Ascending aorta (tissue), 2 donors: ENCODE measurements at regions of chr2 and their contacts with region 1.

Region 1: GRCh38 chr2:208265801-208266552 is at the start of gene PIKFYVE:
- DNase-seq: peak; percentile 88 to 98
- H3K4me3 ChIP-seq: peak within 1 kb of the TSS; percentile 93 to 100
- H3K27ac ChIP-seq: peak within 1 kb of the TSS; percentile 97 to 98
- H3K4me1 ChIP-seq: peaks cover 0 to 21% of the 10 kb centered on the region in 2 donors
- H3K27me3 ChIP-seq: no peaks in the 10 kb centered on the region
- CTCF ChIP-seq: no peak
- total RNA-seq, gene PIKFYVE: 12.0 TPM

Region 2: DNA sequence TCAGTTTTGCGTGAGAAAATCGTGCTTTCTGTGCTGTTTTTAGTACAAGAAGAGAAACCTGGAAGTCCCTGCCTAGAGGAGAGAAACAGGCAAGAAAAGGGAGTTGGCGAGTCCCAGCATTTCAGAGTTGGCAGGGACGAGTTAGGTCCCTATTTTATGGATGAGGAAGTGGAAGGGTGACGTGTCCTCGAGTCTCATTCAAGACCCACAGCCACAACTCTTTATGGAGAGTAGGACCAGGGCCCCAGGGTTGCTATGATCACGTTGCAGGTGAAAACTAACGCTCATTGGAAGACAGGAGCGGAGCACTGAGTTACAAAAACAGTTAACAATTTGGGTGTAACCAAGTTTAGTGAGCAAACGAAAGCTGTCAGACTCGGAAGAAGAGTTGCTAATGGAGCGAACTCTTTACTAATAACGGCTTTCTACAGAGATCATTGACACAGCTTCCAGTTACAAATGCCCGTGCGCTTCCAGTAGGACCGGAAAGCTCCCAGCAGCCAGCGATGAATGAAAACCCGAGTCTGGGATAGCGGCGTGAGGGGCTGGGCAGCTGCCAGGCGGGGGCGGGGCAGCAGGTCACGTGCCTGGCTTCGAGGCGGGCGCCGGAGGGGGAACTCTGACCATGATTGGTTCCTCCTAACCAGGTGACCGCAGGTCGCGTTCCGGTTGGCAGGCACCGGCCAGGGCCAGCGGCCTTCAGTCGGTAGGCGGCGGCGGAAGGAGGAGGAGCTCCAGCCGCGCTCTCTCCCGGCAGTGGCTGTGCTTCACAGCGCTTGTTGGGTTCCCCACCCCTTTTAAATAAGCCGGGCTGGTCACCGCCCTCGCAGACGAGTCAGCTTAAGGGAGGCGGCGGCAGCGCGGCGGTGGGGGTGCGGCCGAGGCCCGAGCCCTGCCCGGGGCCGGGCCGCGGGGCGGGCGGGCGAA is 554.9 kb before region 1 on chr2 and contains the start of gene CCNYL1:
- intact Hi-C with region 1: loop called (anchors 2 kb)
- DNase-seq: peak; percentile 95 to 99
- H3K4me3 ChIP-seq: peak within 1 kb of the TSS; percentile 75 to 92
- H3K27ac ChIP-seq: peak within 1 kb of the TSS; percentile 88 to 90
- H3K4me1 ChIP-seq: peaks cover 0 to 6% of the 10 kb centered on the region in 2 donors
- H3K27me3 ChIP-seq: no peaks in the 10 kb centered on the region
- CTCF ChIP-seq: peak; percentile 17 to 55 (median 17)
- total RNA-seq, gene CCNYL1: 12.3 TPM

Region 3: DNA sequence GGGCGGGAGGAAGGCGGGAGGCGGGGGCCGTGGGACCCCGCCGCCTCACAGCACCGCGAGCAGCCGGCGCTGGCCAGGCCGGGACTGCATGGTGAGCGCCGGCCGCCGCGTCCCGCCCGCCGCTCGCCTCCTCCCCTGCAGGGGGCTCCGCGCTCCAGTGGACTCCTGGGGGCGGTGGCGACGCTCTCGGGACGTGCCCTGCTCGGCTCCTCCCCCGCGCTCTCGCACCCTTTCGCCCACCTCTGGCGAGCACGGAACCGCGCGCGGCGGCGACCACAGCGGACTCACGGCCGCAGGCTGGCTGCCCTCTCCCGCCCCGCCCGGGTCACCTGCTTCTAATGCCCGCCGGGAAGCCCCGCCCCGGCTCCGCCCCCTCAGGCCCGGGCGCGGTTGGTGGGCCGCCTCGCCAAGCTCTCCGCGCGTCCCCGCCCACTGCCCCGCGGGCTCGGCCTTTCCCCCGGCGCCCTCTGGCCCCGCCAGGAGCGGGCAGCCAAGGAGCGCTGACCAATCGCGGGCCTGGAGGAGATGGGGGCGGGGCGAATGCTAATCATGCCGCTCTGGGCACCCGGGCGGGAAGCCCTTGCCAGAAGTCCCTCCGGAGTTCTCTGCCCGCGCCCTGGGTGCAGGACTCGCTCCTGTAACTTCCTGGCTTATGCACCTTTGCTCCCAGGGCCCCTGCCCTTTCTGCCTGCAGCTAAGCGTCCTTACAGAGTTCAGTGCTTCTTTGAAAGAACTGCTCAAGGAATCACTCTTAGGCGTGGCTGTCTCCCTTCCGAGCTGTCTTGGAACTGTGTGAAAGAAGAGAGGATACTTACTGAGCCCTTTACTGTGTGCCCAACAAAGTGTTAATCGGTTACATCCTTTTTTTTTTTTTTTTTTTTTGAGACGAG is 496.1 kb before region 1 on chr2 and contains the start of gene FZD5:
- intact Hi-C with region 1: loop called (anchors 5 kb)
- DNase-seq: peak; percentile 87 to 98
- H3K4me3 ChIP-seq: peak within 1 kb of the TSS; percentile 75 to 83
- H3K27ac ChIP-seq: peak within 1 kb of the TSS; percentile 61 to 65
- H3K4me1 ChIP-seq: peaks cover 8 to 9% of the 10 kb centered on the region in 2 donors
- H3K27me3 ChIP-seq: no peaks in the 10 kb centered on the region
- CTCF ChIP-seq: peak; percentile 45 to 68 (median 47)
- total RNA-seq, gene FZD5: 6.9 TPM

Region 4: GRCh38 chr2:208175069-208175839 is 90.7 kb before region 1 on chr2:
- intact Hi-C with region 1: loop called (anchors 1 kb)
- DNase-seq: peak; percentile 35 to 88
- H3K4me3 ChIP-seq: no peak overlapping the region
- H3K27ac ChIP-seq: no peak overlapping the region
- H3K4me1 ChIP-seq: no peaks in the 10 kb centered on the region
- H3K27me3 ChIP-seq: no peaks in the 10 kb centered on the region
- CTCF ChIP-seq: peak; percentile 61 to 87 (median 78)

Region 5: GRCh38 chr2:208315081-208315788 is 49.3 kb after region 1 on chr2:
- intact Hi-C with region 1: loop called (anchors 5 kb)
- DNase-seq: no peak
- H3K4me3 ChIP-seq: no peak overlapping the region
- H3K27ac ChIP-seq: peak overlapping the region in 1 of 2 donors; percentile 26
- H3K4me1 ChIP-seq: peaks cover 0 to 11% of the 10 kb centered on the region in 2 donors
- H3K27me3 ChIP-seq: no peaks in the 10 kb centered on the region
- CTCF ChIP-seq: no peak

Region 6: GRCh38 chr2:209990838-209991237 is 1724.9 kb after region 1 on chr2:
- intact Hi-C with region 1: loop called (anchors 10 kb)
- DNase-seq: no peak
- H3K4me3 ChIP-seq: no peak overlapping the region
- H3K27ac ChIP-seq: no peak overlapping the region
- H3K4me1 ChIP-seq: no peaks in the 10 kb centered on the region
- H3K27me3 ChIP-seq: no peaks in the 10 kb centered on the region
- CTCF ChIP-seq: no peak